Activated naive CD8-positive, alpha-beta T cell treated with anti-CD3 and anti-CD28 coated beads, Interleukin-2, amount 10 ng/mL, durations not matched to agents 7 days and 5 days (primary cell): ENCODE measurements at regions of chr1 and their contacts with region 1.

Region 1: GRCh38 chr1:181088079-181089016 is at the start of gene IER5:
- DNase-seq: peak; percentile 97
- ATAC-seq: peak; percentile 79
- H3K4me3 Mint-ChIP-seq: peak within 1 kb of the TSS; percentile 98
- H3K27ac Mint-ChIP-seq: peak within 1 kb of the TSS; percentile 99
- H3K4me1 Mint-ChIP-seq: peaks cover 47% of the 10 kb centered on the region
- H3K27me3 Mint-ChIP-seq: no peaks in the 10 kb centered on the region
- total RNA-seq, gene IER5: 36.6 to 36.8 TPM

Region 2: DNA sequence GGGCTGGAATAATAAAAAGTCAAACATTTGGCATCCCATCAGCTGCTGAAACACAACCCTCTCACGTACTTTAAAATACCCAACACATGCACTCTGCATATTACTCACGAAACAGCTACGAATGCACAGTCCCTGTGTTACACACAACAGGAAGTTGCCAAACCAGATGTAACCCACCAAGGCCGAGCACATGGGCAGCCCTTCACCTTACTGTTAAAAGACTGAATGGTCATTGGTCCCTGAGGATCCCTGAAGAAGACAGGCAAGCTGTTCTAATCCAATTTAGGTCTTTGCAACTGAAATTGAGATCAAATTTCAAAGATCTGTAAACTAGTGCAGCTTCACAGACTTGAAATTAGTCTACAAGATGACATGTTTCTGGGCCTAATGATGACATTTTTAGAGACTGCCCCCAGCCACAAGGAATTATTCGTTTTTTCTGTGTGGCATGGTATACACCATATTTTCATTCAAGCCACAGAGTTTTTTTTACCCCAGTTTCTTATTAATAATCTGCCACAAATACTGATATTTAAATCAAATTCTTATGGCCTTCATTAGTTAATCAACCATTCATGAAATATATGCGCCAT is 25.4 kb before region 1 on chr1:
- POLR2A ChIA-PET with region 1: interaction called, 19 read pairs
- DNase-seq: peak; percentile 44
- ATAC-seq: peak; percentile 95
- H3K4me3 Mint-ChIP-seq: peak overlapping the region; percentile 63
- H3K27ac Mint-ChIP-seq: peak overlapping the region; percentile 83
- H3K4me1 Mint-ChIP-seq: peaks cover 17% of the 10 kb centered on the region
- H3K27me3 Mint-ChIP-seq: no peaks in the 10 kb centered on the region

Region 3: DNA sequence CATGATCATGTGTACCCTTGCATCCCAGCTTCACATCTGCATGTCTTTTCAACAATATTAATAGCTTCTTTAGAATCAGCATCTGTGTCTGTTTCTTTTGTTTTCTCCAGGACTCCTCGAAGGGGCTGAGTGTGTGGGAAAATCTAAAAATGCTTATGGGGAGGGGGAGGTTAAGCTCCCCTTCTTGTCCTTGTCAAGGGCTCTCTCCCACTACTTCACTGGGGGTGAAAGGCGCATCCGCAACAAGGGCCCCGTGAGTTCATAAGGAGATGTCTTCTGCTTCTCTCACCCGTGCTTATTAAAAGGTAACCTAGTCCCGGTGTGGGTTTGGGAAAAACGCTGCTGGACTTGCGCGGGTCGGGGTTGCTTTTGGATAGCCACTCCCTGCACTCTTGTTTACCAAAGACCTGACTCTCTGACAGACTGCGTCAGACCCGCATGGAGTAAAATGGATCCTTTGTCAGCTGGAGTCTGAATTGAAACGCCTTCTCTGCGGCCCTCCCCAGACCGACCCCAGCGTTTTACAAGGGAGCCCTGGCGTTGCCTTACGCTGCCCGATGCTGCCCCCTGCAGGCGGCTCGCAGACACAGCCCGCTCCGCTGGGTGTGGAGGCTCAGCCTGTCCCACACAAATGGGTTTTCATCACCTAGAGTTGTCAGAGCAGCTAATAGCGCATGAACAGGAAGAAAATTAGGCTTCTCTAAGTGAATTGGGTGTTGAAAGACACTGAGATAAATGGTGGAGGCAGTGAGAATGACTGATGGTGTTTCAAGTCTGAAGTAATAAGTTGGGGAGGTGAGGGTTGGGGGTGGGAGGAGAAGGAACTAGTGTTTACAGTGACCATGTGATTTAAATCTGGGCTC is 54.0 kb after region 1 on chr1:
- POLR2A ChIA-PET with region 1: interaction called, 175 read pairs
- DNase-seq: peak; percentile 94
- ATAC-seq: peak; percentile 88
- H3K4me3 Mint-ChIP-seq: peak overlapping the region; percentile 67
- H3K27ac Mint-ChIP-seq: peak overlapping the region; percentile 76
- H3K4me1 Mint-ChIP-seq: peaks cover 54% of the 10 kb centered on the region
- H3K27me3 Mint-ChIP-seq: peaks cover 19% of the 10 kb centered on the region

Region 4: DNA sequence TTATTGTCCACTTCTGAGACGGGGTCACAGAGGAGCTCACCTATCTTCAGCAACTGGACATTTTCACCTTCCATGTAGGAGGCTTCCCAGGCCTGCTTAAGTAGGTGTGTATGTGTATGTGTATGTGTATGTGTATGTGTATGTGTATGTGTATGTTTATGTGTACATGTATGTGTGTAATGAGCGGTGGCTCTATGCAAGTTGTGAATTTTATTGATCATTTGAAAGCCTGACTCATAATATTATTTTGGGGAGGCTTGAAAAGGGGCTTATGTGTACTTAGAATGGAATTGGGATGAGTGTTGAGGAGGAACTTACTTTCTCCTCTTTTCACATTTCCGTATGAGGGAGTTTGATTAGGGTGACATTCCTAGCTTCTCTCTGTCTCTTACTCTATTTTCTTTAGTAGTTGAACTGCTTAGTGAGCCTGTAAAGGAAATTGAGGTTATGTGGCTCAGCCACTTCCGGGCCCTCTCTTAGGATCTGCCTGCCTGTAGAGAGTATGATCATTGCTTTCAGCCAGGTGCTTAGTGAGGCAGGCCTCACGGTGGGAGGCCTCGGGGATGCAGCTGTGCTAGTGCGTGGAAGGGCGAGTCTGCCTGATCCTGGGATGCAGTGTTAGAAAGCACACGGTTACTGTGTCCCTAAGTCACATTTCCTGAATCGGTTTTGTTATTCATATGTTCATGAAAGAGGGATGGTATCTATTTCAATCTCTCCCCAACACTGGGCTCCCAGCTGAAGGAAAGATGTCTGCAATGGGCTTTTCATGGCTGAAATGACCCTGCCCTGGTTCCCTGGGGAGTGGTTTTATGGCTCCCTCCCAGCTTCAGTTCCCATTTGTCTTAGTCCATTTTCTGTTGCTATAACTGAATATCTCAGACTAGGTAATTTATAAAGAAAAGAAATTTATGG is 61.2 kb after region 1 on chr1:
- POLR2A ChIA-PET with region 1: interaction called, 175 read pairs
- DNase-seq: peak; percentile 76
- ATAC-seq: peak; percentile 99
- H3K4me3 Mint-ChIP-seq: peak overlapping the region; percentile 74
- H3K27ac Mint-ChIP-seq: peak overlapping the region; percentile 88
- H3K4me1 Mint-ChIP-seq: peaks cover 41% of the 10 kb centered on the region
- H3K27me3 Mint-ChIP-seq: peaks cover 12% of the 10 kb centered on the region